H1 (cell line): ENCODE measurements at regions of chr5 and their contacts with region 1.

Region 1: GRCh38 chr5:154157483-154158378 is 32.8 kb upstream of the GALNT10 start:
- DNase-seq: peak in 1 of 2 experiments; percentile 82
- H3K4me3 ChIP-seq: no peak overlapping the region
- H3K27ac ChIP-seq: no peak overlapping the region; the same call in 1 of the 2 replicates
- H3K4me1 ChIP-seq: peaks cover 0 to 3% (median 1%) of the 10 kb centered on the region in 4 experiments; a peak in 1 of 7 replicates
- H3K27me3 ChIP-seq: no peaks in the 10 kb centered on the region
- CTCF ChIP-seq: peak; percentile 65 to 76 (median 75)
- EP300 ChIP-seq: no peak
- POLR2A ChIP-seq: no peak
- RAD21 ChIP-seq: peak; percentile 56 to 58

Region 2: DNA sequence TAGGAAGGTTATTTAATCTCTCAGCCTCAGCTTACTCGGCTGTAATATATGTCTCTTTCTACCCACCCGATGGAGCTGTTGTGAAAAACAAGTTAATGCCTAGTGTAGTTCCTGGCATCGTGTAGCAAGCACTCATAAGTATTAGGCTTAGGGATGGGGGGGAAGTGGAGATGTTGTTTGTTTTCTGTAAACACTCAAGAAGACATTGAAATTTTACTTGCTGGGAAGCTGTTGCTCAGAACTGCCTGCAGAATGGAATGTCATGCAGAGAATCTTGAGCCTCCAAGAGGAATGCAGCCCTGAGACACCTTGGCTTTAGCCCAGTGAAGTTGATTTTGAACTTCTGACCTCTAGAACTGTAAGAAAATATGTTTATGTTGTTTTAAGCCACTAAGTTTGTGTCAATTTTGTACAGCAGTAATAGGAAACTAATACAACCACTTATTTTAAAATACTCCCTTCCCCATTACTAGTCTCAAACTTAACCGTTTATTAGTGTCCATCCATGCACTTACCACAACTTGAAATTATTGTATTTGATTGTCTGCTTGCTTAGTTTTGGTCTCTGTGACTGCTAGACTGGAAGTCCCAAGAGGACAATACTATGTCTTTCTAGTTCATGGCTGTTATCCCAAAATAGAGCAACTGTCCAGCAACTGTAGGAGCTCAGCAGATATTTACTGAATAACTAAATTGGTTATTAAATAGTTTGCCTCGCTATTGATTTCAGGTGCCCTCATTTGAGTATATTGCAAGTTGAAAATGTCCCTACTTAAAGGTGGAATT is 65.2 kb before region 1 on chr5:
- CTCF ChIA-PET with region 1: interaction called, 14 read pairs
- POLR2A ChIA-PET with region 1: no interaction called
- DNase-seq: no peak
- H3K4me3 ChIP-seq: no peak overlapping the region
- H3K27ac ChIP-seq: no peak overlapping the region
- H3K4me1 ChIP-seq: peaks cover 0 to 5% (median under 1%) of the 10 kb centered on the region in 4 experiments; a peak in 2 of 7 replicates
- H3K27me3 ChIP-seq: no peaks in the 10 kb centered on the region
- CTCF ChIP-seq: no peak
- EP300 ChIP-seq: no peak
- POLR2A ChIP-seq: no peak
- RAD21 ChIP-seq: no peak

Region 3: GRCh38 chr5:154112255-154112654 is 45.5 kb before region 1 on chr5:
- CTCF ChIA-PET with region 1: interaction called, 27 read pairs
- POLR2A ChIA-PET with region 1: no interaction called
- DNase-seq: no peak
- H3K4me3 ChIP-seq: no peak overlapping the region
- H3K27ac ChIP-seq: no peak overlapping the region
- H3K4me1 ChIP-seq: peaks cover 8 to 24% (median 21%) of the 10 kb centered on the region in 4 experiments
- H3K27me3 ChIP-seq: no peaks in the 10 kb centered on the region
- CTCF ChIP-seq: no peak
- EP300 ChIP-seq: no peak
- POLR2A ChIP-seq: no peak
- RAD21 ChIP-seq: no peak

Region 4: GRCh38 chr5:154133591-154133990 is 24.1 kb before region 1 on chr5:
- CTCF ChIA-PET with region 1: interaction called, 41 read pairs
- POLR2A ChIA-PET with region 1: no interaction called
- DNase-seq: no peak
- H3K4me3 ChIP-seq: no peak overlapping the region
- H3K27ac ChIP-seq: no peak overlapping the region
- H3K4me1 ChIP-seq: peaks cover 0 to 3% (median 0%) of the 10 kb centered on the region in 4 experiments; a peak in 1 of 7 replicates
- H3K27me3 ChIP-seq: no peaks in the 10 kb centered on the region
- CTCF ChIP-seq: no peak
- EP300 ChIP-seq: no peak
- POLR2A ChIP-seq: no peak
- RAD21 ChIP-seq: no peak

Region 5: DNA sequence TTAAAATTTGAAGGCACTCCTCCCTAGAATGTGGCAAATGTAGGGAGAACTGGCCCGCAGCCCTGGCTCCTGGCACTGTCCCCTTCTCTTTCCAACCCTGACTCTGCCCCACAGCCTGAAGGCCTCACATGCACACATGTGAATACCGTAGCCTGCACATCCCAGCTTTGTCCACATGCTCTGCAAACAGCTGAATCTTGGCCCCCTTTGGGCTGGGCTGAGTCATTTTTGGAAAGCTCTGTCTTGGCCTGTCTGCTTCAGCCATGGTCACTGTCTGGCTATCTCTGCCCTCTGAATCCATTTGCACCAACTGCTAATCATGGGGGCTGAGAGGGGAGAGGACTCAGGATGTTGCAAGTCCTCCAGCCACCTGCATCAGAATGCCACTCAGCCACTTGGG is 10.7 kb after region 1 on chr5:
- CTCF ChIA-PET with region 1: interaction called, 65 read pairs
- POLR2A ChIA-PET with region 1: no interaction called
- DNase-seq: no peak
- H3K4me3 ChIP-seq: no peak overlapping the region
- H3K27ac ChIP-seq: no peak overlapping the region
- H3K4me1 ChIP-seq: peaks cover 14 to 21% (median 15%) of the 10 kb centered on the region in 4 experiments
- H3K27me3 ChIP-seq: no peaks in the 10 kb centered on the region
- CTCF ChIP-seq: no peak
- EP300 ChIP-seq: no peak
- POLR2A ChIP-seq: no peak
- RAD21 ChIP-seq: no peak

Region 6: GRCh38 chr5:154179846-154180710 is 22.3 kb after region 1 on chr5:
- CTCF ChIA-PET with region 1: interaction called, 167 read pairs
- POLR2A ChIA-PET with region 1: no interaction called
- DNase-seq: no peak
- H3K4me3 ChIP-seq: no peak overlapping the region
- H3K27ac ChIP-seq: no peak overlapping the region
- H3K4me1 ChIP-seq: no peaks in the 10 kb centered on the region; a peak in 1 of 7 replicates
- H3K27me3 ChIP-seq: peaks cover 0 to 3% (median 0%) of the 10 kb centered on the region in 4 experiments; a peak in 1 of 7 replicates
- CTCF ChIP-seq: peak; percentile 26 to 84 (median 84)
- EP300 ChIP-seq: no peak
- POLR2A ChIP-seq: no peak
- RAD21 ChIP-seq: peak; percentile 85 to 90

Region 7: DNA sequence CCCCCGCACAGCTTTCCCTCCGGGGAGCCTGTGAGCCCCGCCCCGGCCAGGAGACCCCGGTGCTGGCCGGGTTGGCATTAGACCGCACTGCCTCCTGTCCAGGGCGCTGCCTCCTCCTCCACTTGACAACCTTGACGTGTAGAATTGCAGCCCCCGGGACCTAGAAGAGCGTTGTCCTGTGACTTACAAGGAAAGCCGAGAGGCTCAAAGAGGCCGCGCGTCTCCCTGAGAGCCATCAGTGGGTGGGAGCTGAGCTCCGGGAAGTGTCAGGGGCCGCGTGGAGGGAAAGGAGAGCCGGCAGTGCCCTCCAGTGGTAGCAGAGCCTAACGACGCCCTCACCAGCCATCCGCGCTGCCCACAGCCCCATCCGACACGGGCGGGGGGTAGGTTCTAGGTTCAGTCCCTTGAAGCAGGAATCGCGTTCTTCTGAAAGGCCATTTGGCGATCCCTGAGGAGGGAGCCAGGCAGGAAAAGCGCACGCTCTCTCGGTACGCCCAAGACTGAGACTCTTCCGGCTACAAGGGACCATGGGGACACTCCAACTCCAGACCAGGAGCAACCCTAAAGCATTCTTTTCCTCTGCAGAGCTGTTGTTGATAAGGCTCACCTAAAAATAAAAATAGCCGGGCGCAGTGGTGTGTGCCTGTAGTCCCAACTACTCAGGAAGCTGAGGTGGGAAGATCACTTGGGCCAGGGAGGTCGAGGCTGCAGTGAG is 247.5 kb after region 1 on chr5:
- CTCF ChIA-PET with region 1: interaction called, 16 read pairs
- POLR2A ChIA-PET with region 1: no interaction called
- DNase-seq: peak; percentile 60 to 91
- H3K4me3 ChIP-seq: peak overlapping the region in 3 of 4 experiments; percentile 21 to 51 (median 30); a peak in 6 of 8 replicates
- H3K27ac ChIP-seq: no peak overlapping the region
- H3K4me1 ChIP-seq: no peaks in the 10 kb centered on the region
- H3K27me3 ChIP-seq: no peaks in the 10 kb centered on the region; a peak in 1 of 7 replicates
- CTCF ChIP-seq: peak; percentile 86 to 96 (median 93)
- EP300 ChIP-seq: no peak
- POLR2A ChIP-seq: no peak
- RAD21 ChIP-seq: peak; percentile 97 to 100